ENCODE measurements at regions of chr9 and their contacts with region 1.

Region 1: DNA sequence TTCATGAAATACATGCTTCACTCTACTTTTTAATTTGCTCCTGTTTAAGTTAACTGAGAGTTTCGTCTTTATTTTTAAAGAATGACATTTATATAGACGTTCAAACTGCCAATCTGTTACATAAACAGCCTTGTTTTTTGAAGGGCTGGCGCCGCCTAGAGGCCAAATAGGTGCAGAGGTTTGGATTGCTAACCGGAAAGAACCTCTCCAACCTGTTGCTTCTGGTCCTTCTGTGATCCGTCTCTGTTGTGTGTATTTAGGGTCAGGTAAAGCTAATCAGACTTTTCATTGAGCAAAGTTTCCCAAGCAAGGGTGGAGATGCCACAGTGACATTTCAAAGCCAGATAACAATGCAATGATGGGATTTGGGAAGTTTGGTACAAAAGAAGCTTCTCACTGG is 39.5 kb upstream of the GLIS3 start:
- H3K4me3 ChIP-seq: no peak overlapping the region
- H3K27ac ChIP-seq: no peak overlapping the region
- H3K4me1 ChIP-seq: no peaks in the 10 kb centered on the region
- CTCF ChIP-seq: no peak

Region 2: GRCh38 chr9:4077499-4078102 is 261.8 kb before region 1 on chr9:
- CTCF ChIA-PET with region 1: interaction called, 15 read pairs
- POLR2A ChIA-PET with region 1: no interaction called
- H3K4me3 ChIP-seq: no peak overlapping the region
- H3K27ac ChIP-seq: no peak overlapping the region
- H3K4me1 ChIP-seq: no peaks in the 10 kb centered on the region
- CTCF ChIP-seq: 0 out of 2 replicates have a peak, but pooled peaks have one; percentile 38

Region 3: GRCh38 chr9:4246969-4247368 is 92.4 kb before region 1 on chr9:
- CTCF ChIA-PET with region 1: no interaction called
- POLR2A ChIA-PET with region 1: no interaction called
- H3K4me3 ChIP-seq: no peak overlapping the region
- H3K27ac ChIP-seq: no peak overlapping the region
- H3K4me1 ChIP-seq: no peaks in the 10 kb centered on the region
- CTCF ChIP-seq: no peak

Region 4: GRCh38 chr9:4289411-4290380 is 49.7 kb before region 1 on chr9:
- CTCF ChIA-PET with region 1: no interaction called
- POLR2A ChIA-PET with region 1: no interaction called
- H3K4me3 ChIP-seq: no peak overlapping the region
- H3K27ac ChIP-seq: no peak overlapping the region
- H3K4me1 ChIP-seq: peaks cover 13% of the 10 kb centered on the region
- CTCF ChIP-seq: no peak

Region 5: GRCh38 chr9:4315582-4316215 is 23.7 kb before region 1 on chr9:
- CTCF ChIA-PET with region 1: interaction called, 139 read pairs
- POLR2A ChIA-PET with region 1: no interaction called
- H3K4me3 ChIP-seq: no peak overlapping the region
- H3K27ac ChIP-seq: no peak overlapping the region
- H3K4me1 ChIP-seq: no peaks in the 10 kb centered on the region
- CTCF ChIP-seq: peak; percentile 54; the same call in 1 of the 2 replicates

Region 6: GRCh38 chr9:4356306-4356705 is 16.9 kb after region 1 on chr9:
- CTCF ChIA-PET with region 1: interaction called, 13 read pairs
- POLR2A ChIA-PET with region 1: no interaction called
- H3K4me3 ChIP-seq: no peak overlapping the region
- H3K27ac ChIP-seq: no peak overlapping the region
- H3K4me1 ChIP-seq: no peaks in the 10 kb centered on the region
- CTCF ChIP-seq: no peak

Region 7: GRCh38 chr9:4382722-4383317 is 43.5 kb after region 1 on chr9:
- CTCF ChIA-PET with region 1: interaction called, 11 read pairs
- POLR2A ChIA-PET with region 1: no interaction called
- H3K4me3 ChIP-seq: no peak overlapping the region
- H3K27ac ChIP-seq: no peak overlapping the region
- H3K4me1 ChIP-seq: no peaks in the 10 kb centered on the region
- CTCF ChIP-seq: peak; percentile 35; the same call in 1 of the 2 replicates

Region 8: GRCh38 chr9:4769321-4770080 is 430.1 kb after region 1 on chr9:
- CTCF ChIA-PET with region 1: no interaction called
- POLR2A ChIA-PET with region 1: no interaction called
- H3K4me3 ChIP-seq: no peak overlapping the region
- H3K27ac ChIP-seq: no peak overlapping the region
- H3K4me1 ChIP-seq: no peaks in the 10 kb centered on the region
- CTCF ChIP-seq: no peak

Measured in HEK293 (cell line).